Caco-2 (cell line): ENCODE measurements at regions of chr1 and their contacts with region 1.

Region 1: GRCh38 chr1:119613769-119614720 is 34.0 kb downstream of the ZNF697 start:
- DNase-seq: peak; percentile 77 to 86
- H3K4me3 ChIP-seq: no peak overlapping the region
- H3K4me3 Mint-ChIP-seq: no peak overlapping the region
- H3K27ac Mint-ChIP-seq: no peak overlapping the region
- H3K4me1 ChIP-seq: no peaks in the 10 kb centered on the region
- H3K4me1 Mint-ChIP-seq: peaks cover 6% of the 10 kb centered on the region
- H3K27me3 ChIP-seq: no peaks in the 10 kb centered on the region
- H3K27me3 Mint-ChIP-seq: no peaks in the 10 kb centered on the region
- CTCF ChIP-seq: peak; percentile 50 to 54

Region 2: GRCh38 chr1:119449964-119450363 is 164.1 kb before region 1 on chr1:
- CTCF ChIA-PET with region 1: no interaction called
- POLR2A ChIA-PET with region 1: no interaction called
- intact Hi-C with region 1: loop called (anchors 1 kb)
- DNase-seq: peak; percentile 47 to 51
- H3K4me3 ChIP-seq: no peak overlapping the region
- H3K4me3 Mint-ChIP-seq: no peak overlapping the region
- H3K27ac Mint-ChIP-seq: no peak overlapping the region
- H3K4me1 ChIP-seq: no peaks in the 10 kb centered on the region
- H3K4me1 Mint-ChIP-seq: no peaks in the 10 kb centered on the region
- H3K27me3 ChIP-seq: no peaks in the 10 kb centered on the region
- H3K27me3 Mint-ChIP-seq: no peaks in the 10 kb centered on the region
- CTCF ChIP-seq: peak; percentile 21 to 25

Region 3: GRCh38 chr1:119483441-119484200 is 130.4 kb before region 1 on chr1:
- CTCF ChIA-PET with region 1: no interaction called
- POLR2A ChIA-PET with region 1: no interaction called
- intact Hi-C with region 1: no loop called
- DNase-seq: peak; percentile 73 to 90
- H3K4me3 ChIP-seq: no peak overlapping the region
- H3K4me3 Mint-ChIP-seq: peak overlapping the region; percentile 54
- H3K27ac Mint-ChIP-seq: peak overlapping the region; percentile 99
- H3K4me1 ChIP-seq: peaks cover 59% of the 10 kb centered on the region
- H3K4me1 Mint-ChIP-seq: peaks cover 47% of the 10 kb centered on the region
- H3K27me3 ChIP-seq: no peaks in the 10 kb centered on the region
- H3K27me3 Mint-ChIP-seq: no peaks in the 10 kb centered on the region
- CTCF ChIP-seq: no peak

Region 4: GRCh38 chr1:119549719-119550132 is 64.3 kb before region 1 on chr1:
- CTCF ChIA-PET with region 1: no interaction called
- POLR2A ChIA-PET with region 1: no interaction called
- intact Hi-C with region 1: loop called (anchors 1 kb)
- DNase-seq: peak; percentile 66 to 75
- H3K4me3 ChIP-seq: no peak overlapping the region
- H3K4me3 Mint-ChIP-seq: no peak overlapping the region
- H3K27ac Mint-ChIP-seq: no peak overlapping the region
- H3K4me1 ChIP-seq: no peaks in the 10 kb centered on the region
- H3K4me1 Mint-ChIP-seq: peaks cover 11% of the 10 kb centered on the region
- H3K27me3 ChIP-seq: no peaks in the 10 kb centered on the region
- H3K27me3 Mint-ChIP-seq: no peaks in the 10 kb centered on the region
- CTCF ChIP-seq: peak in 1 of 2 experiments; percentile 58

Region 5: DNA sequence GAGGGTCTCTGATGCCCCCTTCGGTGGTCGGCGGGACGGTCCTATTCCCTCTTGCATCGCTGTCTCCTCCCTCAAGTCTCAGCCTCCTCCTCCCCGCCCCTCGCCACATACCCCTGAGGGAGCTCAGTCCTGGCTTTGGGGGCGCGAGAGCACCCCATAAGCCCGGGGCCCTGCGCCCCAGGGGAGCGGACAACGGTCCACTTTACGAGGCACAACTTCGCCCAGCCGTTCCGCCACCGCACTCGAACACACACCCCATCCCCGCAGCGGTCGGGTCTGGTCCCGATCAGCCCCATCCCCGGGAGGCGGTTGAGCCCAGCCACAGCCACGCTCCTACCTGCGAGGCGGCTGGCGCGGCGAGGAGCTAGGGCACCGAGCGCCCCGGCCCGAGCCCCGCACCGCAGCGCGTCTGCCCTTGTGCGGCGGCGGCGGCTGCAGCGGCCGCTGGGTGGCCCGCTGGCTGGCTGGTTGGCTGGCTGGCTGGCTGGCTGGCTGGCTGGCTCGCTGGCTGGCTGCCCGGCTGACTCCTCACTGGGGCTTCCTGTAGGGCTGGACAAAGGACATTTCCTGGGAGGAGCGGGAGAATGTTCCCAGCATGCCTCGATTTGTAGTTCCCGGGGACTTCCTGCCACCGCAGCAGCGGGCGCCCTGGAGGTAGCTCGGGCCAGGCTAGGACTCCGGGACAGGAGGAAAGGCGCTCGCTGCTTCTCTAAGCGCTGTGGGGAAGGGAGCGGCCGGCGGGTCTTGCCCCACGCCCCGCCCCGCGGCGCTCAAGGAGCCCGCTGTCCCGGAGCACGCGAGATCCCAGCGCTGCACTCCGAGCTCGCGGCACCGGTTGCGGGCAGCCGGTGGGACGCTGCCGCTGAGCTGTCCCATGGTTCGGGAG is 33.9 kb after region 1 on chr1 and contains the start of gene ZNF697:
- CTCF ChIA-PET with region 1: interaction called, 3 read pairs
- POLR2A ChIA-PET with region 1: interaction called, 4 read pairs
- intact Hi-C with region 1: loop called (anchors 5 kb)
- DNase-seq: peak; percentile 89 to 93
- H3K4me3 ChIP-seq: peak within 1 kb of the TSS; percentile 89
- H3K4me3 Mint-ChIP-seq: peak within 1 kb of the TSS; percentile 97
- H3K27ac Mint-ChIP-seq: peak within 1 kb of the TSS; percentile 40
- H3K4me1 ChIP-seq: no peaks in the 10 kb centered on the region
- H3K4me1 Mint-ChIP-seq: peaks cover 9% of the 10 kb centered on the region
- H3K27me3 ChIP-seq: no peaks in the 10 kb centered on the region
- H3K27me3 Mint-ChIP-seq: peaks cover under 1% of the 10 kb centered on the region
- CTCF ChIP-seq: peak; percentile 14 to 21
- total RNA-seq, gene ZNF697: 2.9 and 3.1 TPM in 2 replicates

Region 6: GRCh38 chr1:119675349-119676345 is 61.6 kb after region 1 on chr1:
- CTCF ChIA-PET with region 1: interaction called, 7 read pairs
- POLR2A ChIA-PET with region 1: no interaction called
- intact Hi-C with region 1: loop called (anchors 1 kb)
- DNase-seq: peak; percentile 66 to 74
- H3K4me3 ChIP-seq: peak overlapping the region; percentile 28
- H3K4me3 Mint-ChIP-seq: peak overlapping the region; percentile 66
- H3K27ac Mint-ChIP-seq: no peak overlapping the region
- H3K4me1 ChIP-seq: no peaks in the 10 kb centered on the region
- H3K4me1 Mint-ChIP-seq: peaks cover 13% of the 10 kb centered on the region
- H3K27me3 ChIP-seq: no peaks in the 10 kb centered on the region
- H3K27me3 Mint-ChIP-seq: no peaks in the 10 kb centered on the region
- CTCF ChIP-seq: peak; percentile 65 to 68